ENCODE measurements at regions of chrX and their contacts with region 1.

Region 1: DNA sequence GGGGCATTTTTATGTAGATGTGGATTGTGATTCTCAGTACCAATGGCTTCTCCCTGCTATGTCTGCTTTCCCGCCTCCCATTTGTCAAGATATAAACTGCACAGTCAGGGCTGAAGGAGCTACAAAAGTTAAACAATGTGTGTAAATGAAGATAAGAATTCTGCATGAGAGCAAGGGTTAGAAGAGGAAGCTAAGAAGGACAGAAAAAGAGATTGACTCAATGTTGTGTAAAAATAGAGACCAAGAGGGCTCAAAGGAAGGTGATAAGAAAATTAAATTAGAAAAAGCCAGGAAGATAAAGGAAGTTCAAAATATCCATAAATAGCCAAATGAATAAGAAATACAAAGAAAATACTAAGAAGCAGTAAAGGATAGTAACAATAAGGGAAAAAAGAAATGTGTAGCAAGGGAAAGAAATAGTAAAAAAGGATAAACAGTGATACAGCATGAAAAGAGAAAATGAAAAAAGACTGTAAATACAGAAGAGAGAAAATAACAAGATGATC is 82.5 kb downstream of the AMELX start:
- DNase-seq: no peak
- ATAC-seq: no peak
- H3K4me3 ChIP-seq: no peak overlapping the region
- H3K27ac ChIP-seq: no peak overlapping the region
- H3K4me1 ChIP-seq: no peaks in the 10 kb centered on the region
- H3K27me3 ChIP-seq: no peaks in the 10 kb centered on the region
- CTCF ChIP-seq: no peak
- POLR2A ChIP-seq: no peak

Region 2: DNA sequence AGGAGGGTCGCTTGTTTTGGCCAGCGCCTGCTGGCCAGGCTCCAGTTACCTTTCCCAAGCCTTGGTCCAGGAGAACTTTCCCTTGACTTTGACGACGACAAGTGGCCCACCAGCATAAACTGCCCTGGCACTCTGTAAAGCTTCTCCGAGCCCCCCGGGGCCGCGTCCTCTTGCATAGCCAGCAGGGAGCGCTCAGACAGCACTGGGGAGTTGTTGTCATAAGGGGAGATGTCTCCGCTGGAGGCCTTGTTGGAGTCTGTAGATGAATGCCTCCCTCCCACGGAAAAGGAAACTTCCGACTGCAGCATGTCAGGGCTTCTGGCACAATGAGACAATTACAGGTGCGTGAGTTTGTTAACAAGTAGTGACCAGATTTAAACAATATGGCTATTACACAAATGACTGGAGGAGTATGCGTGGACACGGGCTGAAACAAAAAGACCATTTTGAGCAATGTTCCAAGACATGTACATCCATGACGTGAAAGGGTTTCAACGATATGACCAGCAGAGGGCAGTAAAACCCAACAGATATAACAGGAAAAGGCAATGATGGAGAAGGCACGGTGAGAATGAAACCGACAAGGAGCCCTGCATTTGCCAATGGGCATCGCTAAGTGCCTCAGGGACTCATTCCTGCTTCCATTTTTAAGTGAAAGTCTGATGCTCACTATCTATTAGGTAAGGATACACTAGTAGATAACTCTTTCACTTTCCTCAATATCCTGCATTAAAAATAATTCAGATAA is 231.6 kb before region 1 on chrX:
- intact Hi-C with region 1: loop called in 1 of 2 experiments (anchors 10 kb)
- DNase-seq: peak in 2 of 3 donors; percentile 21 to 47
- ATAC-seq: peak; percentile 88 to 97 (median 94)
- H3K4me3 ChIP-seq: no peak overlapping the region
- H3K27ac ChIP-seq: no peak overlapping the region
- H3K4me1 ChIP-seq: no peaks in the 10 kb centered on the region
- H3K27me3 ChIP-seq: no peaks in the 10 kb centered on the region
- CTCF ChIP-seq: peak; percentile 64 to 77 (median 74)
- POLR2A ChIP-seq: no peak

Region 3: DNA sequence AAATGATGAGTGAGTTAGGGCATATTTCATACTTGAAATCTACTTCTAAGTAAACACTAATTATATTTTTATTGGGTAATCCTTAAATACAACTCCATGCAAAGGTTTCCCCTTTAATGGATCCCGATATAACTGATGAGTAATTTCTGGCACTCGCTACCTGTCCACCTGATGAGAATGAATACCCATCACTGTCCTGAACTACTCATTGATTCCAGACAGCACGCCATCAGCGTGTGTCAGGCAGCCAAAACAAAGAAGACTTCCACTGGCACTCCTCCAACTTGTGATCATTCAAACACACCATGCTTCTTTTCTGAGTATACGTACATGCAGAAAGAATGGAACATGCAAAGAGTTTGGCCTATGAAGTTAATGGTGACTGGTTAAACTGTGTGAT is 195.1 kb before region 1 on chrX:
- intact Hi-C with region 1: no loop called
- DNase-seq: no peak
- ATAC-seq: peak in 1 of 4 donors; percentile 38
- H3K4me3 ChIP-seq: no peak overlapping the region
- H3K27ac ChIP-seq: no peak overlapping the region
- H3K4me1 ChIP-seq: no peaks in the 10 kb centered on the region
- H3K27me3 ChIP-seq: no peaks in the 10 kb centered on the region
- CTCF ChIP-seq: no peak
- POLR2A ChIP-seq: no peak

Measured in right lobe of liver (tissue), 6 donors.